ENCODE measurements at regions of chr1 and their contacts with region 1.

Region 1: DNA sequence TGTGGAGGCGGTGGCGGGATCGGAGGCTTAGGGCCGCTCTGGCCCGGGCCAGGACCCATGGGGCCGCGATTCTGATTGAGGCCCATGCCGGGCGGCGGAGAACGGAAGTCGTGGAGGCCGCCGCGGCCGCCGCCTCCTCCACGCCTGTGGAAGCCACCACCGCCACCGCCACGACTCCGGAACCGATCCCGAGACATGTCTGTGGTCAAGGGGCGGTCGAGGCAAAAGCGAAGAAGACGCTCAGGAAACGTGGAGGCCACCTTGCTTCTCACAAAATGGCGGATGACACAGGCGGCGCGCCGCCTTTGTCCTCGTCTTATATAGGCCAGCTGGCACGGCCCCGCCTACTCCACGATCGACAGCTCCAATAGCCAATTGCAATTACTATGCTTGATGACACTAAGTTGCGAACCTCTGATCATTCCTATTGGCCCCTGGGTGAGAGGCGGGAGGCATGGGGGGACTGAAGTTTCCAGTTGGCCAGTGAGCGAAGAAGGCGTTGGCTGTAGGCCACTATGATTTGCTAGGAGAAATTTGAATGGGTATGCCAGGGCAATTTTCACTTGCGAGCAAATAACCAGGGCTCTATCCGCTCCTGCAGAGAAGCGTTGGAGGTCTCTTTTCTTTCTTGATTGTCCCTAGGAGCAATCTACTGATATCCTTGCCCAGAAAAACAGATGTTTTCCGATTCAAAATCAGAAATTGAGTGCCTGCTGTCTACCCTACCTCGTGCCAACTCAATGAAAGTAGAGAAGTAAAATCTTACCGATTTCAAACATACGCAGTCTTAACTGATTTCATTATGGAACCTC is at the start of gene SFPQ:
- DNase-seq: peak; percentile 96 to 99
- H3K4me3 ChIP-seq: peak within 1 kb of the TSS; percentile 98
- H3K27ac ChIP-seq: peak within 1 kb of the TSS; percentile 72
- H3K4me1 ChIP-seq: peaks cover 21% of the 10 kb centered on the region
- H3K27me3 ChIP-seq: no peaks in the 10 kb centered on the region
- CTCF ChIP-seq: no peak
- total RNA-seq, gene SFPQ: 191 and 299 TPM in 2 replicates

Region 2: DNA sequence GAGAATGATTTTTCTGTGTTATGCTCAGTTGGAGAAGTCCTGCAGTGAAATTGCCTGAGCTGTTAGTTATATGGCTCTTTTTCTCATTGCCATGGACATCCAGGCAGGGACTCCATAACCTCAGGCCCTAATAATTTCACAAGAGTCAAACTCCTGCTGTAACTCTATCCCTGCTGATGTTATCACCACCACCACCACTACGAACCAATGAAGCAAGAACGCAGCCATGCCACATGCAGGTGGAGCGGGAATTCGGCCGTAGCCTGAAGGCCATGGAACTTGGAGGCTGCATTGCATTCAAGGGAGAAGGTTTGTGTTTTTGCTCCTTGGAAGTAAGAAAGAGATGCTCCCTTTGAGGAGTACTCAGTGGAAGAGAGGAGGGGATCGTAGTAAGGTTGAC is 246.8 kb before region 1 on chr1:
- CTCF ChIA-PET with region 1: no interaction called
- POLR2A ChIA-PET with region 1: no interaction called
- intact Hi-C with region 1: no loop called
- DNase-seq: peak; percentile 29 to 40
- H3K4me3 ChIP-seq: no peak overlapping the region
- H3K27ac ChIP-seq: no peak overlapping the region
- H3K4me1 ChIP-seq: no peaks in the 10 kb centered on the region
- H3K27me3 ChIP-seq: peaks cover 73% of the 10 kb centered on the region
- CTCF ChIP-seq: no peak

Region 3: DNA sequence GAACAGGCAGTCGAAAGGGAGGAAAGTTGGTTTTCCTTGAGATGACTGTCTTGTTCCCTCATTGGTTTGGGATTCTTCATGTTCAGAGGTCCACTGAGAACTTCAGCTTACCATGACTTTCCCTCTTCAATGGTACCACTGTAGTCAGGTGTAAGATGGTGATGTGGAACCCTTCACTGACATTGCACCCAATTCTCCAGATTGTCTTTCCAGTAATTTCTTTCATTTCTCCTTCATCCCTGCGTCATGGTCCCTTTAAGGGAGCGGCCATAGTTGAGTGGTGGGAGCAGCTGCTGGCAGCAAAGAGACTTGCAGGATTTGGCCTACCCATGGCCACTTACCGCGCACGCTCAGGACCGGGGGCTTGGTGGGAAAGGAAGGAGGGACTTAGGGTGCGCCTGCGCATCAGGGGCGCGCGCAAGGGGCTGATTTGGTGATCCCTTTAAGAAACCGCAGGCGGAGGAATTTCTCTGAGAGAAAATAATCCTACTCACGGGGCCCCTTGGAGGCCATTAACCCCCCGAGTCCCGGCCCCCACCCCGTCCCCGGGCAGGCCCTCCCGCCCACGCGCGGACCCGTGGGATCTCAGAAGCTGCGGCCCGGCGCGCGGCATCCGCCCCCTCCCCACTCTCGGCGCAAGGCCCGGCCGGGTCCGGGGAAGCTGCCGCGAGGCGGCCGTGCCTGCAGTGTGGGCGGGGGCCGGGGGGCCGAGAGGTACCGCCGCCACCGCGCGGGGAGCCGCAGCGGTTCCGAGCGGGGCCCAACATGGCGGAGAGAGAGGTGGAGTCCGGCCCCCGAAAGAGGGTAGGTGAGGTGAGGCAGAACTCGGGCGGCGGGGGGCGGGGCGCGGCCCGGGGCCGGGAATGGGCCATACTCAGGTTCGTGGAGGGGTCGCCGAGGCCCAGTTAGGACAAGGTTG is 75.5 kb after region 1 on chr1 and contains the start of gene ZMYM4:
- CTCF ChIA-PET with region 1: no interaction called
- POLR2A ChIA-PET with region 1: interaction called, 6 read pairs
- intact Hi-C with region 1: loop called (anchors 2 kb)
- DNase-seq: peak; percentile 92 to 95
- H3K4me3 ChIP-seq: peak within 1 kb of the TSS; percentile 71
- H3K27ac ChIP-seq: peak within 1 kb of the TSS; percentile 71
- H3K4me1 ChIP-seq: peaks cover 35% of the 10 kb centered on the region
- H3K27me3 ChIP-seq: no peaks in the 10 kb centered on the region
- CTCF ChIP-seq: no peak
- total RNA-seq, gene ZMYM4: 55.6 and 84.4 TPM in 2 replicates

Region 4: GRCh38 chr1:35557292-35558063 is 364.4 kb after region 1 on chr1 and contains the starts of genes KIAA0319L and NCDN:
- CTCF ChIA-PET with region 1: no interaction called
- POLR2A ChIA-PET with region 1: no interaction called
- intact Hi-C with region 1: loop called (anchors 5 kb)
- DNase-seq: peak; percentile 92 to 99
- H3K4me3 ChIP-seq: peak within 1 kb of the TSS; percentile 64
- H3K27ac ChIP-seq: peak within 1 kb of the TSS; percentile 92
- H3K4me1 ChIP-seq: peaks cover 10% of the 10 kb centered on the region
- H3K27me3 ChIP-seq: no peaks in the 10 kb centered on the region
- CTCF ChIP-seq: no peak
- total RNA-seq, gene KIAA0319L: 69.1 and 72.0 TPM in 2 replicates
- total RNA-seq, gene NCDN: 26.6 and 28.0 TPM in 2 replicates